IMR-90 (cell line): ENCODE measurements at regions of chr11 and their contacts with region 1.

Region 1: DNA sequence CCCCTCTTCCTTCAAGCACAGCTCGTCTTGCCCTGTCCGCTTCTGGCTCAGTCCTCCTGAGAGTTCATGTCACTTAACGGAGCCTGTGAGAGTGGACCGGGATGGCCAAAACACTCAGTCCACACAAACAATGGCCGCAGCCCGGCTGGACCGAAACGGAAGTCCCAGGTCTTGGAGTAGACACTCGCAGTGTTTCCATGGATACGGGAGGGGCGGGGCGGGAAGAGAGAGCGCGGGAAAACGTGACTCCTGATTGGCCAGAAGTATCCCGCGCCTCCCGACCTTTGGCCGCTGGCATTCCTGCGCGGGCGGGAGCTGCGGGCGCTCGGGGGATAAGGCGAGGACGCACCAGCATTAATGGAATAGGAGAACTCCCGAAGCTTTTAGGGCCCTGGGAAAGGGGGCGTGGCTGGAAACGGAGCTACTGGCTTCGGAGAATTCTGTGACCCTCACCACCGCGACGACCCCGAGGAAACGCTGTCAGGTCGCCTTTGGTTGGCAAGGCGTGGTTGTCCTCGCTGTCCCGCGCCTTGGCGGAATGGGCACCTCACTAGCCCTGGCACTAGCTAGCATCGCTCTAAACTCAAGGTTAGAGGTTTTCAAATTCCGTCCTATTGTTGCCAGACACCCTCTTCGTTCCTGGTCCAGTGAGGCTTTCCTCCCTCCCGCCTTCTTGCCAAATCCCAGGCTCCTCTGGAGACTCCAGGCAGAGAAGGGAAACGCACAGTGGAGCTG is at the starts of genes NLRP14 and ZNF214:
- DNase-seq: peak; percentile 89
- ATAC-seq: peak; percentile 98
- H3K4me3 ChIP-seq: peak within 1 kb of the TSS; percentile 71
- H3K27ac ChIP-seq: peak within 1 kb of the TSS; percentile 79
- H3K4me1 ChIP-seq: peaks cover 1% of the 10 kb centered on the region; the same call in 1 of the 2 replicates
- H3K27me3 ChIP-seq: no peaks in the 10 kb centered on the region
- CTCF ChIP-seq: no peak
- POLR2A ChIP-seq: peak; percentile 62
- RAD21 ChIP-seq: no peak
- total RNA-seq, gene NLRP14: under 0.01 TPM in 2 replicates
- total RNA-seq, gene ZNF214: 2.5 and 3.1 TPM in 2 replicates

Region 2: DNA sequence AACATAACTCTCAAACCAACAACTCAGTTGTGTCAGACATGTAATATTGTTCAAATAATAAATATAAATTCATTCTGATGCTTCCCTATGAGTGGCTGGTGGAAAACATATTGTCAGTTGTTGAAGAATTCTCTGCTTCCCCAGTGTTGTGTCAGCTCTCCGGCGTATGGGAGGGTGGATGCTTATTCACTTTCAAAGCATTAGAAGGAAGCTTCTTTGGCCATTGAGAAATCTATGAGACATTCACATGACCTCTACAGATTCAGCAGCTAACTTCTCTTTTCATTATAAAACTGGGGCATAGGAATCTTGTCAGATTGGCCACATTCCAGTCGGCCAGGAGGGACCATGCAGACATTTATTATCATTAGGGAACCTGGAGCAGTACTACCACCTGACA is 1822.8 kb before region 1 on chr11:
- CTCF ChIA-PET with region 1: no interaction called
- POLR2A ChIA-PET with region 1: no interaction called
- dilution Hi-C with region 1: no loop called
- in situ Hi-C with region 1: no loop called
- intact Hi-C with region 1: no loop called
- DNase-seq: peak; percentile 75
- ATAC-seq: peak; percentile 84
- H3K4me3 ChIP-seq: no peak overlapping the region
- H3K27ac ChIP-seq: no peak overlapping the region
- H3K4me1 ChIP-seq: peaks cover 2% of the 10 kb centered on the region; the same call in 1 of the 2 replicates
- H3K27me3 ChIP-seq: no peaks in the 10 kb centered on the region
- CTCF ChIP-seq: no peak
- POLR2A ChIP-seq: no peak
- RAD21 ChIP-seq: no peak

Region 3: GRCh38 chr11:6812390-6813005 is 207.9 kb before region 1 on chr11:
- CTCF ChIA-PET with region 1: interaction called, 3 read pairs
- POLR2A ChIA-PET with region 1: no interaction called
- dilution Hi-C with region 1: no loop called
- in situ Hi-C with region 1: no loop called
- intact Hi-C with region 1: loop called (anchors 5 kb)
- DNase-seq: peak; percentile 34
- ATAC-seq: peak; percentile 96
- H3K4me3 ChIP-seq: no peak overlapping the region
- H3K27ac ChIP-seq: no peak overlapping the region
- H3K4me1 ChIP-seq: no peaks in the 10 kb centered on the region
- H3K27me3 ChIP-seq: no peaks in the 10 kb centered on the region; the same call in 1 of the 2 replicates
- CTCF ChIP-seq: peak; percentile 71
- POLR2A ChIP-seq: no peak
- RAD21 ChIP-seq: peak; percentile 71

Region 4: DNA sequence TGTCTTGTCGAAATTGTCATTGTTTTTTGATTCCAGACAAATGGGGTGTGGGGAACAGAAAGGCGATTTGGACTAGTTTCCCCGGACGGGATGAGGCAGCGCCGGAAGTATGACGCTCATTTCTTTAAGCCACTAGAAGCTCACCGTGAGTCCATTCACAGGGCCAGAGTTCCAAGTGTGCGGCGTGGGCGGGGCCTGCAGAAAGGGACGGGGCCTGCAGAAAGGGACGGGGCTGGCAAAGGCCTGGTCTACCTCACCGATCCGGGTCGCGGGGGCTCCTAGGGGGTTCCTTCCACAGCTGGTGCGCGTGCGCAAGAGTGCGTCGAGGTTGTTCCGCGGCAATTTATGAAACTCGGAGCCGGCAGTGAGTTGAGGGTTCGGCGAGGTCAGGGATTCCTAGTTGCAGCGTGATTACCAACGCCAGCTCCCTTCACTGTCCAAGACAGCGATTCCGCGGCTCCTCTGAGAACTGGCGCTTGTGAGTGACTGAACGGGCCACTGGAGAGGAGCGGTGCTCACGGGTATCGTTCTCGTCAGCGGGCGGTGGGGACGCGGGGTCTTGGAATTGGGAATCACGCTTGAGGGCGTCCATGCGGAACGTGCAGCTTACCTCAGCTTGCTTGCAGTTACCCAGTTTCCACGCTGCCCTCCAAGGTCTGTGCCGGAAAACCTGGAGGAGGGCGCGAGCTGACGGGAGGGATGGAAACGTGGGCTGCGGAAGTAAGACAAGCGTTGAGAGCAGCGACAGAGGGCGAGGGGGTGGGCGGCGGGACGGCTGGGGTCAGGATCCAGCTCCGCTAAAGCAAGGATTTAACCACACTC is 93.9 kb before region 1 on chr11 and contains the start of gene ZNF215:
- CTCF ChIA-PET with region 1: no interaction called
- POLR2A ChIA-PET with region 1: no interaction called
- dilution Hi-C with region 1: no loop called
- in situ Hi-C with region 1: no loop called
- intact Hi-C with region 1: loop called (anchors 2 kb)
- DNase-seq: peak; percentile 81
- ATAC-seq: peak; percentile 91
- H3K4me3 ChIP-seq: peak within 1 kb of the TSS; percentile 65
- H3K27ac ChIP-seq: peak within 1 kb of the TSS; percentile 26
- H3K4me1 ChIP-seq: no peaks in the 10 kb centered on the region
- H3K27me3 ChIP-seq: no peaks in the 10 kb centered on the region
- CTCF ChIP-seq: no peak
- POLR2A ChIP-seq: no peak
- RAD21 ChIP-seq: peak; percentile 8; the same call in 1 of the 2 replicates
- total RNA-seq, gene ZNF215: 7.2 and 7.7 TPM in 2 replicates

Region 5: DNA sequence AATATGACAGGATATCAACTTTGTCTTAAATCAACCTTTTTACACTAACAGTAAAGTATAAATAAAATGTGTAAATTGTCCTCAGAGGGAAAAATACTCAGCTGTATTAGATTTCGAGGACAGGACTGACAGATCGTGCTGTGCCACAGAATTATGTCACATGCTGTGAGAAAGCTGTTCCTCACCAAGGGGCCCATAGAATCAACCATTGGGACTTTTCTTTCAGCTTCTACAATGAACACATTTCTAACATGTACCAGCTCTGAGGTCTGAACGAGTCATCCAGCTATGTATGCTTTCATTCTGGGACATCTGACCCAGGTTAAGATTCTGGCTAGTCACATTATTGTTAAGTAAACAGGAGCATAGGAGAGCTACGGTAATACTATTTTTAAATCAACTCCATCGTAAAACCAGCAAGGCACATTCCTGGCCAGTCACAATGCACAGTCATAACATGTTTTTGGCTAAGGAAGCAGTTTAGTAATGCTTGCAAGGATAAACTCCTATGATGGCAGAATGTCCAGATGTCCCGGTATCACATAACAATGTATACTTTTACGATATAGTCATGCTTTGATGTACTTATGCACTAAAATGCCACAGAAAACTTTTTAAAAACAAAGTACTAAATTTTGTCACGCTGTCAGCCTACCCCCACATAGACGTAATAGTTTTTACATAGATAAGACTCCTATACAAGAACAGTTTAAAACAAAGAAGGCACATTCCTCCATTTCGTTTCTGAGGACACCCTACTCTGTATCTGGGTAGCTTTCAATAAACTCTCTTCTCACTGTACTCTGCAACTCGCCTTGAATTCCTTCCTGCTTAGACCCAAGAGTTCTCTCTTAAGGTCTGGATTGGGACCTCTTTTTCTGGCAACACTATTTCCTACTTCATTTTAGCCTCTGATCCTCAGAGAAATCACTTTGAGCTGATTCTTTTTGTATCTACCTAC is 27.6 kb before region 1 on chr11:
- CTCF ChIA-PET with region 1: no interaction called
- POLR2A ChIA-PET with region 1: no interaction called
- dilution Hi-C with region 1: no loop called
- in situ Hi-C with region 1: no loop called
- intact Hi-C with region 1: loop called (anchors 2 kb)
- DNase-seq: peak; percentile 99
- ATAC-seq: peak; percentile 84
- H3K4me3 ChIP-seq: no peak overlapping the region; the same call in 1 of the 2 replicates
- H3K27ac ChIP-seq: peak overlapping the region; percentile 67; the same call in 1 of the 2 replicates
- H3K4me1 ChIP-seq: peaks cover 18% of the 10 kb centered on the region
- H3K27me3 ChIP-seq: no peaks in the 10 kb centered on the region
- CTCF ChIP-seq: no peak
- POLR2A ChIP-seq: no peak
- RAD21 ChIP-seq: no peak

Region 6: GRCh38 chr11:7072401-7073028 is 52.2 kb after region 1 on chr11:
- CTCF ChIA-PET with region 1: no interaction called
- POLR2A ChIA-PET with region 1: no interaction called
- dilution Hi-C with region 1: no loop called
- in situ Hi-C with region 1: no loop called
- intact Hi-C with region 1: loop called (anchors 1 kb)
- DNase-seq: no peak
- ATAC-seq: no peak
- H3K4me3 ChIP-seq: no peak overlapping the region
- H3K27ac ChIP-seq: no peak overlapping the region
- H3K4me1 ChIP-seq: no peaks in the 10 kb centered on the region
- H3K27me3 ChIP-seq: no peaks in the 10 kb centered on the region
- CTCF ChIP-seq: no peak
- POLR2A ChIP-seq: no peak
- RAD21 ChIP-seq: no peak